Activated CD4-positive, alpha-beta T cell treated with anti-CD3 and anti-CD28 coated beads for 36 hours (primary cell): ENCODE measurements at regions of chr9 and their contacts with region 1.

Region 1: GRCh38 chr9:123349691-123350480 is 6.1 kb upstream of the CRB2 start:
- DNase-seq: peak; percentile 79
- ATAC-seq: peak; percentile 85
- H3K4me3 Mint-ChIP-seq: no peak overlapping the region
- H3K27ac Mint-ChIP-seq: no peak overlapping the region
- H3K4me1 Mint-ChIP-seq: no peaks in the 10 kb centered on the region
- H3K27me3 Mint-ChIP-seq: peaks cover 9% of the 10 kb centered on the region

Region 2: GRCh38 chr9:122464633-122465567 is 885.0 kb before region 1 on chr9:
- CTCF ChIA-PET with region 1: no interaction called
- POLR2A ChIA-PET with region 1: no interaction called
- intact Hi-C with region 1: loop called in 1 of 2 experiments (anchors 2 kb)
- DNase-seq: peak; percentile 81
- ATAC-seq: peak; percentile 84
- H3K4me3 Mint-ChIP-seq: peak overlapping the region; percentile 68
- H3K27ac Mint-ChIP-seq: peak overlapping the region; percentile 79
- H3K4me1 Mint-ChIP-seq: peaks cover 14% of the 10 kb centered on the region
- H3K27me3 Mint-ChIP-seq: peaks cover 27% of the 10 kb centered on the region

Region 3: DNA sequence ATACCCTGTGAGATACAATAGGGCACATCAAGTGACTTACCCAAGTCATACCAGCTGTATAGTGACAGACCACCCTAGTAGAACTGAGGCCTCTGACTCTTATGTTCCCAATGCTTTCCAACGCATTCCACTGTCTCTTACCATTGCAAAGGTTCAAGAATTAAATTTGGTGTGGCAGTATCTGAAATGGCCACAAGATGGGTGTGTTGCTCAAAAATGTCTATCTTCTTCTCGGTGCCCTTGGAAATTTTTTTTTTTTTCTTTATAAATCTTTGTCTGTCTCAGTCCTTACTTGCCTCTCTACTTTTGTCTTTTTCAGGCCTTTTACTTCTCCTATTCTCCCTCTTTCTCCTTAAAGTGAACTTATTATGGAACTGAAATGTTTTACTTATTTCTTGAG is 268.1 kb before region 1 on chr9:
- CTCF ChIA-PET with region 1: interaction called, 31 read pairs
- POLR2A ChIA-PET with region 1: no interaction called
- intact Hi-C with region 1: loop called (anchors 1 kb)
- DNase-seq: peak; percentile 34
- ATAC-seq: peak; percentile 39
- H3K4me3 Mint-ChIP-seq: no peak overlapping the region
- H3K27ac Mint-ChIP-seq: no peak overlapping the region
- H3K4me1 Mint-ChIP-seq: peaks cover 3% of the 10 kb centered on the region
- H3K27me3 Mint-ChIP-seq: no peaks in the 10 kb centered on the region

Region 4: GRCh38 chr9:123338710-123339665 is 10.9 kb before region 1 on chr9:
- CTCF ChIA-PET with region 1: interaction called, 14 read pairs
- POLR2A ChIA-PET with region 1: no interaction called
- intact Hi-C with region 1: no loop called
- DNase-seq: peak; percentile 87
- ATAC-seq: peak; percentile 75
- H3K4me3 Mint-ChIP-seq: peak overlapping the region; percentile 62
- H3K27ac Mint-ChIP-seq: peak overlapping the region; percentile 99
- H3K4me1 Mint-ChIP-seq: peaks cover 35% of the 10 kb centered on the region
- H3K27me3 Mint-ChIP-seq: no peaks in the 10 kb centered on the region

Region 5: DNA sequence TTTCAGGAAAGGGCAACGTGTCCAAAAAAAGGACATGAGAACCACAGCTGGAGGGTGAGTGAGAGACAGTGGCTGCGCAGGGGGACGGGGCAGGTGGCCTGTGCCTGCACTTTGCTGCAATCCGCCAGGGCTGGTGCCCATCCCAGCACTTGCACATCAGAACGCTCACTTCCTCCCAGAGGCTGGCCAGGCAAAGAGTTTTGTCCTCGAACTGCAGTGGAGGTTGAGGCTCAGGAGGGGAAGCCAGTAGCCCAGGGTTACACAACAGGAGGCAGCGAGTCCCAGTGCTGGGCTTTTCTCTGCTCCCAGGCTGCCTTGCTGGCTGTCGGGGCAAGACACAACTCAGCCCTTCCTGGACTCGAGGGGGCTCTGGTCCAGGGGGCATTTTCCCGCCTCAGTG is 39.2 kb after region 1 on chr9:
- CTCF ChIA-PET with region 1: interaction called, 25 read pairs
- POLR2A ChIA-PET with region 1: no interaction called
- intact Hi-C with region 1: loop called (anchors 1 kb)
- DNase-seq: no peak
- ATAC-seq: no peak
- H3K4me3 Mint-ChIP-seq: no peak overlapping the region
- H3K27ac Mint-ChIP-seq: no peak overlapping the region
- H3K4me1 Mint-ChIP-seq: no peaks in the 10 kb centered on the region
- H3K27me3 Mint-ChIP-seq: no peaks in the 10 kb centered on the region

Region 6: DNA sequence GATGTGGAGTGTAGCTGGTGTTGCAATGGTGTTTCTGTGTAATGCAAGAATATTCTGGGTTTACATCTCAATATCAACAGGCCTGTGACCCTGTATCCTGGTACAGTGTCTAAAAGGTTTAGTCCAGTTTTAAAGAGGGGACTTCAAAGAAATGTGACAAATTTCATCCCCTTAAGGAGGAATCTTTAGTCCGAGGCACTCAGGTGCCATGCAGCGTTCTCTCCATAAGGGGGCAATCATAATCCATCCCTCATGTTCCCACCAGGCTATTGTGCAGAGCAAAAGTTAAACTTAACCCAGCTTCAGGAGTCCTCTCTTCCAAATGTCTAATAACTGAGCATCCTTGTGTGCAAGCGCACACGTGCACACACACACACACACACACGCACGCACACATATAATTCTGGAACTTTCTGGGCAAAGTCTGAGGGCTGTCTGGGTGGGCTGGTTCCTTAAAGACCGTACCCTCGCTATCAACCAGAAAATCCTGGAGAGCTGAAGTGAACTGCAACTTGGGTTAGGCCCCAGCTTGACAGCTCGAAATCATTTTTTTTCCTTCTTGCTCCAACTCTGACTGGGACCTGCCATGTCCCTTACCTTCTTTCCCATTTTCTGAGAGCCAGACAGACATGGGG is 52.1 kb after region 1 on chr9:
- CTCF ChIA-PET with region 1: no interaction called
- POLR2A ChIA-PET with region 1: no interaction called
- intact Hi-C with region 1: no loop called
- DNase-seq: peak; percentile 36
- ATAC-seq: no peak
- H3K4me3 Mint-ChIP-seq: no peak overlapping the region
- H3K27ac Mint-ChIP-seq: no peak overlapping the region
- H3K4me1 Mint-ChIP-seq: peaks cover 3% of the 10 kb centered on the region
- H3K27me3 Mint-ChIP-seq: no peaks in the 10 kb centered on the region

Region 7: GRCh38 chr9:123438321-123438720 is 88.4 kb after region 1 on chr9:
- CTCF ChIA-PET with region 1: no interaction called
- POLR2A ChIA-PET with region 1: no interaction called
- intact Hi-C with region 1: no loop called
- DNase-seq: no peak
- ATAC-seq: no peak
- H3K4me3 Mint-ChIP-seq: no peak overlapping the region
- H3K27ac Mint-ChIP-seq: no peak overlapping the region
- H3K4me1 Mint-ChIP-seq: no peaks in the 10 kb centered on the region
- H3K27me3 Mint-ChIP-seq: no peaks in the 10 kb centered on the region